ENCODE measurements at regions of chr7 and their contacts with region 1.

Region 1: DNA sequence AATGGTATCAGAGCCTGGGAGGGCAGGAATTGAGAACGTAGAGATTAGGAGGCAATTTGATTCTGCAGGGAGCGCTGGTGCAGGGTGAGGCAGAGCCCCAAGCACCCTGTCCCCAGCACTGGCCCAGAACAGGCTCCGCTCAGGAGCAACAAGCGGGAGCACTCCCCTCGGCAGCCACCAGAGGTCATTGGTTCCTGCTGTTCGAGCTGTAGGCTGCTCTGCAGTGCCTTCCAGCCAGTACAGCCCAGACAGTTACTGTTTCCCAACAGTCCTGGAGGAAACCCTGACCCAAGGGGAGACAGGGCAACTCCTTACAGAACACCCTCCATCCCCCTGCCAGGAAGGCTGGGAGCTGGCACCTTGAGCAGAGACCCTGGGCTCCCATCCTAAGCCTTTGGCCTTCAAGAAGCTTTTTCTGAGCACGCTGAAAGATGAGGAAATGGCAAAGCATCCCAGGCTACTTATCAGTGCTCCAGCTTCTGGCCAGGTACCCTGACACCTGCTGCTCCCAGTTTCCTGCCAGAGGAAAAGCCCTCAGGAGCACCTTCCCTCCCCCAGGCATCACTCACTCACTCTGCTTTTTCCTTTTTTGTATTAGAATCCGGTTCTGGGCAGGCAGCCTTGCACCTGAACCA is 71.2 kb upstream of the EFCAB10 start:
- DNase-seq: peak; percentile 82 to 86
- H3K4me3 ChIP-seq: no peak overlapping the region
- H3K27ac ChIP-seq: no peak overlapping the region
- H3K4me1 ChIP-seq: peaks cover 0 to 7% of the 10 kb centered on the region in 2 donors
- H3K27me3 ChIP-seq: no peaks in the 10 kb centered on the region
- CTCF ChIP-seq: peak; percentile 81 to 94 (median 84)
- POLR2A ChIP-seq: no peak

Region 2: GRCh38 chr7:105454921-105455320 is 197.6 kb before region 1 on chr7:
- intact Hi-C with region 1: no loop called
- DNase-seq: no peak
- H3K4me3 ChIP-seq: no peak overlapping the region
- H3K27ac ChIP-seq: peak overlapping the region in 1 of 2 donors; percentile 2
- H3K4me1 ChIP-seq: no peaks in the 10 kb centered on the region
- H3K27me3 ChIP-seq: no peaks in the 10 kb centered on the region
- CTCF ChIP-seq: no peak
- POLR2A ChIP-seq: no peak

Region 3: DNA sequence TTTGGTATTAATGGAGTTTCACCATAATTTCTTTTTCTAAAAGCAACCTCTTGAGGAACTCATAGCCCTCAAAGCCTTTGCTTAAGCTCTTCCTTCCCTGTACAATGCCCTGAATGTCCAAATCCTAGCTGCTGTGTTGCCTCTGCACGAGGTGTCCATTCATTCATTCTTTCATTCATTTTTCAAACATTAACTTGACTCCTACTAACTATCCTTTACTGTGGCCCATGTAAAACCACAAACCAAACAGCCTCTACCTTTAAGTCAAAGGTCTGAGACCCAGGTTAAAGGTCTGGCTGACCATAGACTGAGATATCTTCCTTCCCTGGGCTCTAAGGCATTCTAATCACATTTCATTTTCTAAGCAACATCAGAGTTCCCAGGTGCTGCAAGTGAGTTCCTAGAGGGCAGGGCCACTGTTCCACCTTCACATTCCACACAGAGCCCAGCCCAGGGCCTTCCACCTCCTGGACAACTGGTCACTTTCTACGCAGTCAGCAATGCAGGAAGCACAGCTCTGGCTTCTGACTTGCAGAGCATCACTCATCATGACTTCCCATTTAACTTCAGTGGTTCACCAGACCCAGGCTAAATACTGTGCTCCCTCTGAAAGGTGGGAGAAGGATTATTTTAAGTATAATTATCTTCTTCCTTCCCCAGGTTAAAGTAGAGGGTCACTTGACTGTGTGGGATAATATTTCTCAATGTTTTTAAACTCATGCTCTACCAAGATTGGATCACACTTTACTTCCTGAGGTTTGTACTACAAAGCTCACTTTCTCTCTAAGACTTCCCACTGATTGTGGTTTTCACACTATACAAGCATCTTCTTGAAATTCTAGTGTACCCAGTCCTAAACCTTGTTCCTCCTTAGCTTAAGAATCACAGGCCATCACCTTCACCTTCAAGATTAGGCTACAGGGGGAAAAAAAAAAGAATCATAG is 204.8 kb after region 1 on chr7:
- intact Hi-C with region 1: no loop called
- DNase-seq: no peak
- H3K4me3 ChIP-seq: no peak overlapping the region
- H3K27ac ChIP-seq: no peak overlapping the region
- H3K4me1 ChIP-seq: peaks cover 0 to 6% of the 10 kb centered on the region in 2 donors
- H3K27me3 ChIP-seq: no peaks in the 10 kb centered on the region
- CTCF ChIP-seq: no peak
- POLR2A ChIP-seq: no peak

Region 4: DNA sequence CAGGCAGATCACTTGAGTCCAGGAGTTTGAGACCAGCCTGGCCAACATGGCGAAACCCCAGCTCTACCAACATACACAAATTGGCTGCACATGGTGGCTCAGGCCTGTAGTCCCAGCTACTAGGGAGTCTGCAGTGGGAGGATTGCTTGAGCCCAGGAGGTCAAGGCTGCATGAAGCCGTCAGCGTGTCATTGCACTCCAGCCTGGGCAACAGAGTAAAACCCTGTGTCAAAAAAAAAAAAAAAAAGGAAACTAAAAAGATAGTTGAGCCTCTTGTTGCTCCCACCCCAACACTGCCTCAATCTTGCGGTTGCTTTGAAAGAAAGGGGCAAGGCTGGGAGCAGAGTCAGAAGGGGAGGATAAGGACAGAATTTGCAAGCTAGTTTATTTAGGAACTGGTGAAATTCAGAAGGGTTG is 389.7 kb after region 1 on chr7:
- intact Hi-C with region 1: loop called (anchors 2 kb)
- DNase-seq: no peak
- H3K4me3 ChIP-seq: no peak overlapping the region
- H3K27ac ChIP-seq: peak overlapping the region; percentile 71 to 72
- H3K4me1 ChIP-seq: peaks cover 0 to 6% of the 10 kb centered on the region in 2 donors
- H3K27me3 ChIP-seq: no peaks in the 10 kb centered on the region
- CTCF ChIP-seq: no peak
- POLR2A ChIP-seq: no peak

Region 5: GRCh38 chr7:106166655-106167342 is 514.3 kb after region 1 on chr7:
- intact Hi-C with region 1: loop called (anchors 10 kb)
- DNase-seq: peak in 1 of 2 donors; percentile 68
- H3K4me3 ChIP-seq: no peak overlapping the region
- H3K27ac ChIP-seq: peak overlapping the region; percentile 51 to 60
- H3K4me1 ChIP-seq: peaks cover 5 to 7% of the 10 kb centered on the region in 2 donors
- H3K27me3 ChIP-seq: no peaks in the 10 kb centered on the region
- CTCF ChIP-seq: peak; percentile 70 to 87 (median 82)
- POLR2A ChIP-seq: no peak